A549 (cell line): ENCODE measurements at regions of chr17 and their contacts with region 1.

Region 1: GRCh38 chr17:27236717-27237315 is 57.1 kb upstream of the WSB1 start:
- DNase-seq: peak; percentile 78 to 79
- ATAC-seq: peak; percentile 70 to 80; a peak in 4 of 6 replicates
- H3K4me3 ChIP-seq: no peak overlapping the region
- H3K27ac ChIP-seq: peak overlapping the region; percentile 2 to 31; a peak in 4 of 6 replicates
- H3K4me1 ChIP-seq: peaks cover 24% of the 10 kb centered on the region
- CTCF ChIP-seq: peak; percentile 96
- EP300 ChIP-seq: no peak
- POLR2A ChIP-seq: no peak
- RAD21 ChIP-seq: peak; percentile 93 to 96

Region 2: DNA sequence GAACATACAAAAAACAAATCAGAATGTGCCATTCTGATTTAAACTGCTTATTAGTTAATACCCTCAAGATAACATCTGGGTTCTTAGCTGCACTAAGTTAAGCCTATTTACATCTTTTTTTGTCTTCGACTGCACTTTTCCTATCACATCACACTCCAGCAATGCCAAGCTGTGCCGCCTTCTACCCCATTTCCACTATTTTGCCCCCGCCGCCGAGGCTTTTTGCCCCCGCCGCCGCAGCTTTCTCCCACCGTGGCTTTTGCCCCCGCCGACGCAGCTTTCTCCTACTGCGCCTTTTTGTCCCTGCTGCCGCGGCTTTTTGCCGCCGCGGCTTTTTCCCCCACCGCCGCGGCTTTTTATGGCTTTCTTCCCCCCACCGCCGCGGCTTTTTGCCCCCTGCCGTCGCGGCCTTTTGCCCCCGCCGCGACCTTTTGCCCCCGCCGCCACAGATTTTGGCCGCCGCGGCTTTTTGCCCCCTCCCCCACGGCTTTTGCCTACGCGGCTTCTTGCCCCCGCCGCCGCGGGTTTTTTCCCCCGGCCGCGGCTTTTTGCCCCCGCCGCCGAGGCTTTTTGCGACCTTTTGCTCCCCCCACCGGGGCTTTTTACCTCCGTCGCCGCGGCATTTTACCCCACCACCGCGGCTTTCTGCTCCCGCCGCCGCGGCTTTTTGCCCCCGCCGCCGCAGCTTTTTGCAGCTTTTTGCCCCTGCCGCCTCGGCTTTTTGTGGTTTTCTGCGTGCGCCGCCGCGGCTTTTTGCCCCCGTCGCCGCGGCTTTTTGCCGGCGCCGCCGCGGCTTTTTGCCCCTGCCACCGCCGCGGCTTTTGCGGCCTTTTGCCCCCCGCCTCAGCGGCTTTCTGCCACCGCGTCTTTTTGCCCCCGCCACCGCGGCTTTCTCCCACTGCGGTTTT is 274.3 kb before region 1 on chr17:
- CTCF ChIA-PET with region 1: no interaction called
- POLR2A ChIA-PET with region 1: no interaction called
- DNase-seq: no peak
- ATAC-seq: no peak
- H3K4me3 ChIP-seq: no peak overlapping the region
- H3K27ac ChIP-seq: no peak overlapping the region
- H3K4me1 ChIP-seq: no peaks in the 10 kb centered on the region
- CTCF ChIP-seq: no peak
- EP300 ChIP-seq: no peak
- POLR2A ChIP-seq: no peak
- RAD21 ChIP-seq: no peak

Region 3: DNA sequence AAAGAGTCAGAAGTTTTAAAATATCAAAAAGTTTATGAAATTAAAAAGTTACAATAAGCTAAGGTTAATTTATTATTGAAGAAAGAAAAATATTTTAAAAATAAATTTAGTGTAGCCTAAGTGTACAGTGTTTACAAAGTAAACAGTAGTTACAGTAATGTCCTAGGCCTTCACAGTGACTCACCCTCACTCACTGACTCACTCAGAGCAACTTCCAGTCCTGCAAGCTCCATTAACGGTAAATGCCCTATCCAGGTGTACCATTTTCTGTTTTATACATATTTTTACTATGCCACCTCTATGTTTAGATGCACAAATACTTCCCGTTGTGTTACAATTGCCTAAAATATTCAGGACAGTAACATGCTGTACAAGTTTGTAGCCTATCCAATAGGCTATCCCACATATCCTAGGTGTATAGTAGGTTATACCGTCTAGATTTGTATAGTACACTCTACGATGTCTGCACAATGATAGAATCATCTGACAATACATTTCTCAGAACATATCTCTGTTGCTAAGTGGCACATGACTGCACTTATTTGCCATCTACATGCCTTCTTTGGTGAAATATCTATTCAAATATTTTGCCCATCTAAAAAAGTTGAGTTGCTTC is 10.1 kb before region 1 on chr17:
- CTCF ChIA-PET with region 1: interaction called, 17 read pairs
- POLR2A ChIA-PET with region 1: no interaction called
- DNase-seq: peak in 1 of 2 experiments; percentile 73
- ATAC-seq: peak; percentile 88 to 98
- H3K4me3 ChIP-seq: no peak overlapping the region
- H3K27ac ChIP-seq: peak overlapping the region; percentile 43 to 48; a peak in 4 of 6 replicates
- H3K4me1 ChIP-seq: peaks cover 20% of the 10 kb centered on the region
- CTCF ChIP-seq: no peak
- EP300 ChIP-seq: no peak
- POLR2A ChIP-seq: no peak
- RAD21 ChIP-seq: no peak

Region 4: DNA sequence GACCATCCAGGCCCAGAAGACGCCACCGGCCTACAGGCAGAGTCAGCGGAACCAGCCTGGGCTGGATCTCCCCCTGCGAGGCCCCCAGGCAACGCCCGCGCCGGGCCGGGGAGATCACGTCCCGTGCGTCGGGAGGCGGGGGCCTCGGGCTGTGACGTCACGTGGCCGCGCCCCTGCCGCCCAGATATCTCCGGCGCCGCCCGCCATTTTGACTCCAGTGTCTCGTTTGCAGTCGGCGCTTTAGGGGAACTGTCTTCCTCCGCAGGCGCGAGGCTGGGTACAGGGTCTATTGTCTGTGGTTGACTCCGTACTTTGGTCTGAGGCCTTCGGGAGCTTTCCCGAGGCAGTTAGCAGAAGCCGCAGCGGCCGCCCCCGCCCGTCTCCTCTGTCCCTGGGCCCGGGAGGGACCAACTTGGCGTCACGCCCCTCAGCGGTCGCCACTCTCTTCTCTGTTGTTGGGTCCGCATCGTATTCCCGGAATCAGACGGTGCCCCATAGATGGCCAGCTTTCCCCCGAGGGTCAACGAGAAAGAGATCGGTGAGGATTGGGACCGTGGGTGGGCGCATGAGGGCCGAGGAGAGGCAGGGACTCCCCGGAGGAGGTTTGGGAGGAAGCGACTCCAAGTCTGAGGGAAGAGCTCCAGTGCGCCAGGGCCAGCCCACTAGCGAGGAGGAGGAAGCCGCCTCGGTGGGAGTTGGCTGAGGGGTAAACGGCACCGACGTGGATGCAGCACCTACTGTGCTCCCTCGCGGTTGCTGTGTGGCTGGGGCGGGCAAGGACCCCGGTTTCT is 57.3 kb after region 1 on chr17 and contains the start of gene WSB1:
- CTCF ChIA-PET with region 1: interaction called, 61 read pairs
- POLR2A ChIA-PET with region 1: interaction called, 37 read pairs
- DNase-seq: peak; percentile 92 to 94
- ATAC-seq: peak; percentile 87 to 89
- H3K4me3 ChIP-seq: peak within 1 kb of the TSS; percentile 71
- H3K27ac ChIP-seq: peak within 1 kb of the TSS; percentile 88 to 94
- H3K4me1 ChIP-seq: peaks cover 25% of the 10 kb centered on the region
- CTCF ChIP-seq: no peak
- EP300 ChIP-seq: no peak
- POLR2A ChIP-seq: peak; percentile 98
- RAD21 ChIP-seq: peak in 1 of 2 experiments; percentile 18; a peak in 1 of 5 replicates
- polyA plus RNA-seq, gene WSB1: 107 and 111 TPM in 2 replicates

Region 5: DNA sequence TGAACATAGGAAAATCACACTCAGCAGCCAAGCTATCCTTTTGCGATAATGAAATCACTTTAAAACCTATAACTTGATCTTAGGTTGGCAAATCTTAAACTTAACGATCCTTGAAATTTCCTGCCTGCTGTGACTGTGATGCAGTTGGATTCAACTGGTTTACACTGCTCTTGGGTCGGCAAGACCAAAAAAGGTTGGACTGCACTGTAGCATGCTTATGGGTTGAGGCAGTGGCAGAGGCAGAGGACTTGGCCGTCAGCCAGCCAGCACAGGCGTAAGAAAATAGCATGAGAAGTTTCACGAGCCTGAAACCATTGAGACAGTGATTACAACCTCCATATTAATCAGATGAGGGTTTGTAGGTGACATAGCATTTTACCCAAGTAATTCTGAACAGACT is 78.5 kb after region 1 on chr17:
- CTCF ChIA-PET with region 1: interaction called, 22 read pairs
- POLR2A ChIA-PET with region 1: no interaction called
- DNase-seq: no peak
- ATAC-seq: no peak
- H3K4me3 ChIP-seq: no peak overlapping the region
- H3K27ac ChIP-seq: no peak overlapping the region
- H3K4me1 ChIP-seq: peaks cover 8% of the 10 kb centered on the region; the same call in 2 of the 3 replicates
- CTCF ChIP-seq: no peak
- EP300 ChIP-seq: no peak
- POLR2A ChIP-seq: no peak
- RAD21 ChIP-seq: no peak

Region 6: GRCh38 chr17:27353461-27354050 is 116.7 kb after region 1 on chr17:
- CTCF ChIA-PET with region 1: interaction called, 120 read pairs
- POLR2A ChIA-PET with region 1: no interaction called
- DNase-seq: peak; percentile 96 to 97
- ATAC-seq: peak; percentile 85 to 93
- H3K4me3 ChIP-seq: peak overlapping the region; percentile 59
- H3K27ac ChIP-seq: peak overlapping the region; percentile 90 to 99
- H3K4me1 ChIP-seq: peaks cover 25% of the 10 kb centered on the region
- CTCF ChIP-seq: peak; percentile 99
- EP300 ChIP-seq: peak; percentile 49 to 64; a peak in 2 of 5 replicates
- POLR2A ChIP-seq: peak; percentile 81
- RAD21 ChIP-seq: peak; percentile 67 to 99

Region 7: GRCh38 chr17:27430882-27431491 is 194.2 kb after region 1 on chr17:
- CTCF ChIA-PET with region 1: interaction called, 17 read pairs
- POLR2A ChIA-PET with region 1: no interaction called
- DNase-seq: peak; percentile 45 to 67
- ATAC-seq: peak; percentile 94 to 98
- H3K4me3 ChIP-seq: no peak overlapping the region
- H3K27ac ChIP-seq: no peak overlapping the region
- H3K4me1 ChIP-seq: no peaks in the 10 kb centered on the region
- CTCF ChIP-seq: peak; percentile 60
- EP300 ChIP-seq: no peak
- POLR2A ChIP-seq: no peak
- RAD21 ChIP-seq: peak; percentile 74

Region 8: DNA sequence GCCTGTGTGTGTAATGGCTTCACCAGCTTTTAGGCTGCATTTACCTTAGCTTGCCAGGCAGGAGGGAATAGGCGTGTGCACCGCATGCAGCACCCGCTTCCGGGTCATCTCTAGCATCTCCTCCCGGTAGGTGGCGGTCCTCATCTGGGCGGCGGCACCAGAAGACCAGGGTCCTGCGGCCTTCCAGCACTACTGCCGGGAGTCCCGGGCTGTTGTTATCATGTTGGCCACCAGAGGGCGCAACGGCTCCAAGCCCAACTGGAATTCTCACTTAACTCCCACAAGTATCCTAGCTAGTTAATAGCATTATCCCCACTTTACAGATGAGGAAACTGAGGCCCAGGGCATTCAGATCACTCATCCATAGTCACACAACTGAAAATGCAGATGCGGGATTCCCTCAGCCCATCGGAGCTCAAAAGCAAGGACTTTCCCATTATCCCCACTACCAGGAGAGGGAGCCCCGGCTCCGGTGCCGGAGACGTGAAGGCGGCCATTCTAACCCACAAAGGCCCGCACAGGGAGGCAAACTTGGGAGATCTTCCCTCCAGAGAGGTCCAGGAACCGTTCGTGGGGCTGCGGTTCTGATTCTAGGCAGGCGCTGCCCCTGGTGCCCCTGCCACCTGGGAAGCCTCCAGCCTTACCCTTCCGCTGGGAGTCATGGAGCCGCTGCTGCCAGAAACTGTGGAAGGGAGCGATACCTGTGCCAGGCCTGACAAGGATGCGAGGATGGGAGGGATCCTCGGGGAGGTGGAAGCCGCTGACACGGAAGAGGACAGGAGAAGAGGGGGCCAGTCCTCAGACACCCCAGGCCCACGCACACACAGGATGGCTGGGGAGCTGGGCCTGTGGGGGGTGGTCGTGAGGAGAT is 418.1 kb after region 1 on chr17:
- CTCF ChIA-PET with region 1: interaction called, 24 read pairs
- POLR2A ChIA-PET with region 1: interaction called, 7 read pairs
- DNase-seq: peak; percentile 92 to 94
- ATAC-seq: peak; percentile 79 to 97
- H3K4me3 ChIP-seq: no peak overlapping the region
- H3K27ac ChIP-seq: peak overlapping the region in 1 of 2 experiments; percentile 35; a peak in 1 of 6 replicates
- H3K4me1 ChIP-seq: no peaks in the 10 kb centered on the region
- CTCF ChIP-seq: peak; percentile 100
- EP300 ChIP-seq: no peak
- POLR2A ChIP-seq: no peak
- RAD21 ChIP-seq: peak; percentile 68 to 88